ENCODE measurements at regions of chr1 and their contacts with region 1.

Region 1: DNA sequence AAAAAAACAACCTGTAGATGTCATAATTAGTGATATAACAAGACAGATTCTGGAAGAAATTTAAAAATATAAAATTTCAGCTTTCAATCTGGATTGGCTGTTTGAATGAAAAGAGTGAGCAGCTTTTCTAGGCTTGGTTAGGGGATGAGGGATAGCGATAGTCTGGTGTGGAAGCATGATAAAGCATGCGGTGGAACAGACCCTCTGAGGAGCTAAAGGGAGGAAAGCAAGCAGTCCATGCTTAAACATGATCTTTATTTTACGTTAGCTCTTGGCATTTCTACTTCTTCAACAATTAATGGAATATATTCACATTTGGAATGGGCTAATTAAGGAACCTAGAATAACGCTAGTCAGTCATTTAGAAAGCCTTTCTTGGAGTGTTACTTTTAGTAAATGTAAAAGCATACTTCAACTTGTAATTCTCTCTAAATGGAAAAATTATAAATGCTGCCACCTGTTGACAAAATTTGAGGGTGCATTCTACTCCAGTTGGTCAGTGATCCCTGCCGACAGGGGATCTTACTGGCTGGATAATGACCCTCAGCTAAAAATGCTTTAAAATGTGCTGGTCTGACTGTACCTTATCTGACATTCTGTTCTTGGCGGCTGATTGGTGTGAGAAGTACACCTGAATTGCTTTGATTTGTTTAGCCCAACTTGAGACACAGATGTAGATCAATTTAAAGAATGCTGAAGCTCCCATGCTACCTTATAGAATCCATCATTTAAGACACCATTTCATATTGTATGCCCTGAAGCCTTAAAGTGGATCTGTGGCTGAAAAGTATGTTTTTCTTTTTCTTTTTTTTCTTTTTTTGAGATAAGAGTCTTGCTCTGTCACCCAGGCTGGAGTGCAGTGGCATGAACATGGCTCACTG is 61.2 kb downstream of the AK4 start:
- DNase-seq: peak; percentile 67
- H3K4me3 ChIP-seq: no peak overlapping the region
- H3K27ac ChIP-seq: no peak overlapping the region
- H3K4me1 ChIP-seq: no peaks in the 10 kb centered on the region
- H3K27me3 ChIP-seq: peaks cover 0 to 2% of the 10 kb centered on the region in 2 experiments
- CTCF ChIP-seq: peak; percentile 39 to 42
- POLR2A ChIP-seq: no peak

Region 2: DNA sequence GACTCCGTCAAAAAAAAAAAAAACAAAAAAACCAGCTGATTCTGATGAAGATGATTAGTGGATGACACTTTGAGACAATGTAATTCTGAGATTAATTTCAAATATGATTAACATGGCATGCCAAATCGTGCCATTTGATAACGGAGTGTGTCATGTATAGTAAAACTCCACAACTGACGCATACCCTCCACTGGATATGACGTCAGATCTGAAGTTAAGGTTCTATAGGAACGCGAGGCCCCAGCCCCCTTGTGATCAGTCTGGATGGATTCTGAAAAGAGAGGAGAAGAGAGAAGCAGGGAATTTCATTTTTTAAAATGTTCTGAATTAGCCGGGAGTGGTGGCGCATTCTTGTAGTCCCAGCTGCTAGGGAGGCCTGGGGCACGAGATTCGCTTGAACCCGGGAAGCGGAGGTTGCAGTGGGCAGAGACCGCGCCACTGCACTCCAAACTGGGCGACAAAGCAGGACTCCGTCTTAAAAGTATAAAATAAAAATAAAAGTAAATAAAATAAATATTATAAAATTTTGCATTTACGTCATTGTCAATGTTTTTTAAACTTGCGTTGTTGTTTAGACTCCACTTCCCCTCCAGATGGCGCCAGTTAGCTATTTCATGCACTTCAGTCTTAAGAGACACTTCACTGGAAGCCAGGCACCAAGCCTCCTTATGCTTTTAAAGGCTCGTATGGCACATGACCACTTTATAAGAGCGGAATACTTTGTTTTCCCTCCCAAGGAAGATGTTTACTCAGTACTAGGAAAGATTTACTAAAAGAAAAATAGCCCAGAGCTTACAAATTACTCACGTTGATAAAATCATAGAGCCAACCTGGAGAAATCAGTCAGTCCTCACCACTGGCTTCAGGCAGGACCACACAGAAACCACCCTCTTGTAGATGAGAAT is 940.3 kb before region 1 on chr1:
- CTCF ChIA-PET with region 1: no interaction called
- POLR2A ChIA-PET with region 1: no interaction called
- dilution Hi-C with region 1: no loop called
- intact Hi-C with region 1: loop called (anchors 1 kb)
- DNase-seq: peak; percentile 76
- H3K4me3 ChIP-seq: no peak overlapping the region
- H3K27ac ChIP-seq: no peak overlapping the region
- H3K4me1 ChIP-seq: peaks cover under 1% of the 10 kb centered on the region
- H3K27me3 ChIP-seq: peaks cover 0 to 5% of the 10 kb centered on the region in 2 experiments
- CTCF ChIP-seq: peak; percentile 49 to 58
- POLR2A ChIP-seq: no peak

Region 3: GRCh38 chr1:64686828-64687724 is 522.2 kb before region 1 on chr1:
- CTCF ChIA-PET with region 1: no interaction called
- POLR2A ChIA-PET with region 1: no interaction called
- dilution Hi-C with region 1: no loop called
- intact Hi-C with region 1: loop called (anchors 1 kb)
- DNase-seq: peak; percentile 88
- H3K4me3 ChIP-seq: peak overlapping the region in 1 of 3 experiments; percentile 22
- H3K27ac ChIP-seq: peak overlapping the region; percentile 95
- H3K4me1 ChIP-seq: peaks cover 31% of the 10 kb centered on the region
- H3K27me3 ChIP-seq: no peaks in the 10 kb centered on the region
- CTCF ChIP-seq: peak; percentile 67 to 73
- POLR2A ChIP-seq: no peak

Region 4: GRCh38 chr1:65059930-65060538 is 149.2 kb before region 1 on chr1:
- CTCF ChIA-PET with region 1: interaction called, 8 read pairs
- POLR2A ChIA-PET with region 1: no interaction called
- dilution Hi-C with region 1: no loop called
- intact Hi-C with region 1: loop called (anchors 1 kb)
- DNase-seq: peak; percentile 69
- H3K4me3 ChIP-seq: no peak overlapping the region
- H3K27ac ChIP-seq: no peak overlapping the region
- H3K4me1 ChIP-seq: peaks cover 3% of the 10 kb centered on the region
- H3K27me3 ChIP-seq: no peaks in the 10 kb centered on the region
- CTCF ChIP-seq: peak; percentile 33 to 39
- POLR2A ChIP-seq: no peak

Region 5: DNA sequence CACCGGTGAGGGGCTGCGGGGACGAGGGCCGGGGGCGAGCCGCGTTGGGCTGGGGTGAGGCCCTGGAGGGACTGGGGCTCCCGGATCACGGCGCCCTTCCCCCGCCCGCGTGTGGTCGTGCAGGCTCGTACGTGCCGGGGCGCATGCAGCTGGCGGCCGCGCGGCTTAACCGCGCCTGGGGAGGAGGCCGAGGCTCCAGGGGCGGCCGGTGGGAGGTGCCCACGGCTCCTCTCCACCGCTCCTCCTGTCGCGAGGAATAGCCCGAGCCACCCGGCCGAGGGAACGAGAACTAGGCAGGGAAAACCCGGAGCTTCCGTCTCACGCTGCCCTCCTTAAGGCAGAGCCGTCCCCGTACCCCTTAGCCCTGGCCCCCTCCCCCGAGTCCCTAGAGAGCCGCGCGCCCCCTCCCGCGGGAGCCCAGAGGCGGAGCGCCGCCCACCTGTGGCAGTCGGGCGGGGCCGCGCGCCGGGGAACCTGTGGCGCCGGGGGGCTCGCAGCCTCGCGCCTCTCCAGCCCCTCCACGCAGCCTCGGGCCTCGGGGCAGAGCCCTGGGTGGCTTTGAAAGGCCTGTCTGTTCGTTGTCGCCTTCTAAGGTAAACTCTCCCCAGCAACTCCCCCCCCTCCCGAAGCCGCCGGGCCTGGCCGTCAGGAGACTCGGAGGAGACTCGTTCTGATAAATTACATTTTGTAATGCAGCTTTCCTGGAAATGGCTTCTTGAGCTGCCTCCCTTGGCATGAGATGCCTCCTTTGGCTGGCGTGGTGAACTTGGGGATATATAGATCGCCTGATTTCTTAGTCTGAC is 60.5 kb before region 1 on chr1:
- CTCF ChIA-PET with region 1: no interaction called
- POLR2A ChIA-PET with region 1: no interaction called
- dilution Hi-C with region 1: no loop called
- intact Hi-C with region 1: loop called (anchors 2 kb)
- DNase-seq: peak; percentile 12
- H3K4me3 ChIP-seq: peak overlapping the region; percentile 38 to 50 (median 44)
- H3K27ac ChIP-seq: no peak overlapping the region
- H3K4me1 ChIP-seq: no peaks in the 10 kb centered on the region
- H3K27me3 ChIP-seq: peaks cover 0 to 13% of the 10 kb centered on the region in 2 experiments
- CTCF ChIP-seq: no peak
- POLR2A ChIP-seq: no peak

Region 6: GRCh38 chr1:65221638-65222339 is 12.5 kb after region 1 on chr1:
- CTCF ChIA-PET with region 1: interaction called, 13 read pairs
- POLR2A ChIA-PET with region 1: no interaction called
- dilution Hi-C with region 1: no loop called
- intact Hi-C with region 1: no loop called
- DNase-seq: no peak
- H3K4me3 ChIP-seq: no peak overlapping the region
- H3K27ac ChIP-seq: no peak overlapping the region
- H3K4me1 ChIP-seq: no peaks in the 10 kb centered on the region
- H3K27me3 ChIP-seq: no peaks in the 10 kb centered on the region
- CTCF ChIP-seq: no peak
- POLR2A ChIP-seq: no peak

Region 7: DNA sequence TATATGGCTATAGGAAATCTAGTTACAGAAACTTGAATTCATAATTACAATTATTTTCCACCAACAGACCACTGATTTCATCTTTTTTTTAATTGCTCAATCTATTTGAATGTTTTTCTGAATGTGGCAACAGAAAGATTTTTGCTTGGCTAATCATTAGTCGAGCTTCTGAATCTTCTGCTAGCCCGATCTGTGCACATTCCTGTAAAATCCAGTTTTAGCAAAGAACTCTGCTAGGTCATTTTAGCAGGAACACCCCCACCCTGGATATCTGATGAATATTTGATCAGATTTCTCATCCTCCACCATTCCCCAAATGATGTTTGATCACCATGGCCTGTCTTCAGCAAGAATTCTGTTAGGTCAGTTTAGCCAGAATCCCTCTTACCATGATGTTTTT is 387.5 kb after region 1 on chr1:
- CTCF ChIA-PET with region 1: no interaction called
- POLR2A ChIA-PET with region 1: no interaction called
- dilution Hi-C with region 1: no loop called
- intact Hi-C with region 1: no loop called
- DNase-seq: no peak
- H3K4me3 ChIP-seq: no peak overlapping the region
- H3K27ac ChIP-seq: no peak overlapping the region
- H3K4me1 ChIP-seq: no peaks in the 10 kb centered on the region
- H3K27me3 ChIP-seq: no peaks in the 10 kb centered on the region
- CTCF ChIP-seq: no peak
- POLR2A ChIP-seq: no peak